ENCODE measurements at regions of chr14 and their contacts with region 1.

Region 1: GRCh38 chr14:70415788-70416187 is 1.1 kb downstream of the SYNJ2BP start:
- DNase-seq: no peak
- H3K4me3 ChIP-seq: peak overlapping the region; percentile 76
- H3K27ac ChIP-seq: no peak overlapping the region
- H3K4me1 ChIP-seq: no peaks in the 10 kb centered on the region
- H3K27me3 ChIP-seq: no peaks in the 10 kb centered on the region
- CTCF ChIP-seq: no peak

Region 2: GRCh38 chr14:70330596-70330995 is 85.2 kb before region 1 on chr14:
- CTCF ChIA-PET with region 1: no interaction called
- POLR2A ChIA-PET with region 1: no interaction called
- intact Hi-C with region 1: no loop called
- DNase-seq: no peak
- H3K4me3 ChIP-seq: no peak overlapping the region
- H3K27ac ChIP-seq: no peak overlapping the region
- H3K4me1 ChIP-seq: no peaks in the 10 kb centered on the region
- H3K27me3 ChIP-seq: no peaks in the 10 kb centered on the region
- CTCF ChIP-seq: no peak

Region 3: GRCh38 chr14:70595443-70596185 is 179.8 kb after region 1 on chr14:
- CTCF ChIA-PET with region 1: no interaction called
- POLR2A ChIA-PET with region 1: interaction called, 16 read pairs
- intact Hi-C with region 1: no loop called
- DNase-seq: no peak
- H3K4me3 ChIP-seq: no peak overlapping the region
- H3K27ac ChIP-seq: no peak overlapping the region
- H3K4me1 ChIP-seq: peaks cover 9% of the 10 kb centered on the region
- H3K27me3 ChIP-seq: no peaks in the 10 kb centered on the region
- CTCF ChIP-seq: no peak